PC-9 (cell line): ENCODE measurements at regions of chr17 and their contacts with region 1.

Region 1: DNA sequence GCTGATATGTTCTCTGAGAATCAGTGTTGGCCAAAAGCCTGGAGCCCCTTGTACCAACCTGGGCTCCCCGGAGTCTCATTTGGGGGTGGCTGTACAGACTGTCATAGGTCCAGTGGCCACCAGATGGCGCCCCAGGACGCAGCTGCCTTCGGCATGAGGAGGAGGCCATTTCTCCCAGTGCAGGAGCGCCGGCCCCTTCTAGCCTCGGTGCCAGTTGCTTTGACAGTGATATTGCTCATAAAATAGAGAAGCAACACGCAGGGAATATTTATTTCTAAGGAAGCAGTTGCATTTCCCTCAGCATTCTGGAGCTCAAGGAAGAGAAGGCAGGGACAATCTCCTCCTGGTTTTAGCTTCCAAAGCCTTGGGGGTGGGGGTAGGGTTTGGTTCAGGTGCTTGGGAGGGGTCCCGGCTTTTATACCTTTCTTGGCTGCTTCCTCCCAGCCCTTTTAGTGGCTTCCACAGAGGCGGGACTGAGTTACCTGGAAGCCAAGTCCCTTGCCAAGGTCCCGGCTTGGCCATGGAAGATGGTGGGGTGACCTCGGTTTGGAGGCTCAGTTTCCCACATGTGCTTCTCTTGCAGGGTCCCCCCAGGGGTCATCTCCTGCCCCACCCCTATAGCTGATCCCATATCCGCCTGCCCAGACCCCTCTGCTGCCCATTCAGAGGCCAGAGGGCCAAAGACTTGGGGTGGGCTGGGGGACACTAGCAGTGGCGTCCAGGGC is 117.8 kb upstream of the CDC42EP4 start:
- DNase-seq: peak; percentile 47 to 72
- H3K4me3 ChIP-seq: no peak overlapping the region
- H3K27ac ChIP-seq: no peak overlapping the region
- H3K4me1 ChIP-seq: no peaks in the 10 kb centered on the region
- H3K27me3 ChIP-seq: peaks cover 94% of the 10 kb centered on the region
- CTCF ChIP-seq: peak; percentile 98

Region 2: DNA sequence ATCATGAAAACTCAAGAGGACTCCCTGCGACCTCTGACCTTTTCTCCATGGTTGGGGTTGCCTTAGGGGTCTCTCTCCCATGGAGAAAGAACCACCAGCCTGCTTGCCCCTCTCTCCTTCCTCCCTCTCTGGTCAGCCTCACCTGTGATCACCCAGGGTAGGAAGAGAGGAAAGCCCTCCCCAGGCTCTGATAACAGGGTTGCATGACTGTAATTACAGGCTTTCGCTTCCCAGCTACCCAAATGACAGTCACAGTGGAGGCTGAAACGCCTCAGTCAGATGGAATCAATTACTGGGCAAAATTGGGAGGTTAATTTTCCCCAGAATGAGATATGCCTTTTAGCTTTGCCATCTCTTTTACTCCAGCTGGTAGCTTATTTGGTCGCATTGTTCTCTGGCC is 1574.6 kb before region 1 on chr17:
- CTCF ChIA-PET with region 1: no interaction called
- POLR2A ChIA-PET with region 1: no interaction called
- intact Hi-C with region 1: no loop called
- DNase-seq: no peak
- H3K4me3 ChIP-seq: no peak overlapping the region
- H3K27ac ChIP-seq: no peak overlapping the region
- H3K4me1 ChIP-seq: no peaks in the 10 kb centered on the region
- H3K27me3 ChIP-seq: no peaks in the 10 kb centered on the region
- CTCF ChIP-seq: no peak

Region 3: GRCh38 chr17:73371285-73371684 is 58.3 kb before region 1 on chr17:
- CTCF ChIA-PET with region 1: no interaction called
- POLR2A ChIA-PET with region 1: no interaction called
- intact Hi-C with region 1: no loop called
- DNase-seq: no peak
- H3K4me3 ChIP-seq: no peak overlapping the region
- H3K27ac ChIP-seq: no peak overlapping the region
- H3K4me1 ChIP-seq: no peaks in the 10 kb centered on the region
- H3K27me3 ChIP-seq: peaks cover 32% of the 10 kb centered on the region
- CTCF ChIP-seq: no peak

Region 4: GRCh38 chr17:73474370-73474988 is 44.9 kb after region 1 on chr17:
- CTCF ChIA-PET with region 1: no interaction called
- POLR2A ChIA-PET with region 1: no interaction called
- intact Hi-C with region 1: no loop called
- DNase-seq: peak in 1 of 2 experiments; percentile 10
- H3K4me3 ChIP-seq: no peak overlapping the region
- H3K27ac ChIP-seq: no peak overlapping the region
- H3K4me1 ChIP-seq: no peaks in the 10 kb centered on the region
- H3K27me3 ChIP-seq: peaks cover 91% of the 10 kb centered on the region
- CTCF ChIP-seq: no peak

Region 5: GRCh38 chr17:73710095-73710592 is 280.5 kb after region 1 on chr17:
- CTCF ChIA-PET with region 1: no interaction called
- POLR2A ChIA-PET with region 1: no interaction called
- intact Hi-C with region 1: loop called (anchors 1 kb)
- DNase-seq: peak in 1 of 2 experiments; percentile 19
- H3K4me3 ChIP-seq: no peak overlapping the region
- H3K27ac ChIP-seq: no peak overlapping the region
- H3K4me1 ChIP-seq: no peaks in the 10 kb centered on the region
- H3K27me3 ChIP-seq: peaks cover 79% of the 10 kb centered on the region
- CTCF ChIP-seq: peak; percentile 77

Region 6: GRCh38 chr17:73998653-73999645 is 569.3 kb after region 1 on chr17:
- CTCF ChIA-PET with region 1: no interaction called
- POLR2A ChIA-PET with region 1: no interaction called
- intact Hi-C with region 1: loop called (anchors 1 kb)
- DNase-seq: peak in 1 of 2 experiments; percentile 45
- H3K4me3 ChIP-seq: no peak overlapping the region
- H3K27ac ChIP-seq: no peak overlapping the region
- H3K4me1 ChIP-seq: no peaks in the 10 kb centered on the region
- H3K27me3 ChIP-seq: peaks cover 52% of the 10 kb centered on the region
- CTCF ChIP-seq: peak; percentile 76

Region 7: GRCh38 chr17:74203439-74204240 is 774.0 kb after region 1 on chr17 and contains the start of gene RPL38:
- CTCF ChIA-PET with region 1: no interaction called
- POLR2A ChIA-PET with region 1: interaction called, 4 read pairs
- intact Hi-C with region 1: loop called (anchors 1 kb)
- DNase-seq: peak; percentile 90 to 91
- H3K4me3 ChIP-seq: peak within 1 kb of the TSS; percentile 93
- H3K27ac ChIP-seq: peak within 1 kb of the TSS; percentile 80
- H3K4me1 ChIP-seq: peaks cover 17% of the 10 kb centered on the region
- H3K27me3 ChIP-seq: peaks cover 46% of the 10 kb centered on the region
- CTCF ChIP-seq: peak; percentile 89
- total RNA-seq, gene RPL38: 761 and 961 TPM in 2 replicates